ENCODE measurements at regions of chr1 and their contacts with region 1.

Region 1: GRCh38 chr1:37859507-37860345 is at the start of gene MTF1:
- DNase-seq: peak; percentile 95
- ATAC-seq: peak; percentile 98
- H3K4me3 ChIP-seq: peak within 1 kb of the TSS; percentile 92 to 99 (median 99)
- H3K27ac ChIP-seq: peak within 1 kb of the TSS; percentile 81
- H3K4me1 ChIP-seq: peaks cover 27% of the 10 kb centered on the region
- H3K27me3 ChIP-seq: peaks cover 0 to 5% of the 10 kb centered on the region in 2 experiments; a peak in 2 of 5 replicates
- CTCF ChIP-seq: peak; percentile 95
- EP300 ChIP-seq: no peak
- POLR2A ChIP-seq: peak; percentile 88 to 89
- RAD21 ChIP-seq: peak; percentile 41; the same call in 1 of the 2 replicates
- total RNA-seq, gene MTF1: 3.3 and 7.2 TPM in 2 replicates

Region 2: GRCh38 chr1:37807555-37808368 is 52.0 kb before region 1 on chr1 and contains the starts of genes C1orf122 and YRDC:
- CTCF ChIA-PET with region 1: interaction called, 6 read pairs
- POLR2A ChIA-PET with region 1: interaction called, 19 read pairs
- in situ Hi-C with region 1: loop called (anchors 5 kb)
- intact Hi-C with region 1: loop called (anchors 1 kb)
- DNase-seq: peak; percentile 83
- ATAC-seq: peak; percentile 87
- H3K4me3 ChIP-seq: peak within 1 kb of the TSS; percentile 72 to 85 (median 75)
- H3K27ac ChIP-seq: peak within 1 kb of the TSS; percentile 75
- H3K4me1 ChIP-seq: peaks cover 42% of the 10 kb centered on the region
- H3K27me3 ChIP-seq: no peaks in the 10 kb centered on the region; a peak in 1 of 5 replicates
- CTCF ChIP-seq: no peak
- EP300 ChIP-seq: no peak
- POLR2A ChIP-seq: peak; percentile 86 to 89
- RAD21 ChIP-seq: peak; percentile 40; the same call in 1 of the 2 replicates
- total RNA-seq, gene C1orf122: 31.3 and 40.6 TPM in 2 replicates
- total RNA-seq, gene YRDC: 29.2 and 31.8 TPM in 2 replicates

Region 3: DNA sequence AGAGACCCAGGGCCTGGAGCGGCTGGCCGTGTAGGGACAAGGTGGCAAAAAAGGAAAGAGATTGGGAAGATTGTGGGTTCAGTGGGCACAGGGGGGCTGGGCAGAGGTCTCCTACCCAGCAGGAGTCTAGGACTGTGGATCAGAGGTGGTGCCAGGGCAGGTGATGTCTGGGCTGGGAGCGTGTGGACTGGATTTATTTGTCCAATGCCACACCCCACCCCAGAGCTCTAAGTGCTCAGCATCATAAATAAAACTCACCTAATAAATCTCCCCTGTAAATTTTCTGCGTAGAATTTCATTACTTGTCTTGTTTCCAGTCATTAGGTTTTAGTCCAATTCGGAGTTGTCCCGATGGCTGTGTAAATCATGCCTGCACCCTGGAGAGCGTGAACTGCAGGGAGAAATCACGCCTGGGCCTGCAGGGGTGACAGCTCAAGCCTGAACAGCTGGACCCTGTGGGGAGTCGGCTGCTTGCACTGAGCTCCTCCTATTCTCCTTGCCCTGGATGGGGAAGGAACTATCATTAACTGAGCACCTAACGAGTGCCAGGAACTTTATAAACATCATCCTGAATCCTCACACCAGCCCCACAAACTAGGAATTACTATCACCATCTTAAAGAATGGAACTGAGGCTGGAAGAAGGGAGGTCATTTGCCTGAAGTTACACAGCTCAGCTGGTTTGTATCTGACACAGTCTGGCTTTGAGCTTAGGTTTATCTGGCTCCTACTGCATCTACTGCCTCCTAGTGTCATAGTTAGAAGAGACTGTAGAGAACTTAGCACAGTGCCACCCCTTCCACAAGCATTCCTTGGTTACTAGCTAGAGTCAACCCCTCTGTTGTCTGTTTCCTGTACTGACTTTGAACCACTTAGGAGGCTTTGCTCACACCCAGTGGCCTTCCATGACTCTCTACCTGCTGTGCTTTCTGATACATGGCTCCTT is 211.9 kb after region 1 on chr1:
- CTCF ChIA-PET with region 1: no interaction called
- POLR2A ChIA-PET with region 1: no interaction called
- in situ Hi-C with region 1: no loop called
- intact Hi-C with region 1: no loop called
- DNase-seq: peak; percentile 17
- ATAC-seq: peak; percentile 88
- H3K4me3 ChIP-seq: no peak overlapping the region
- H3K27ac ChIP-seq: no peak overlapping the region
- H3K4me1 ChIP-seq: peaks cover 10% of the 10 kb centered on the region
- H3K27me3 ChIP-seq: peaks cover 0 to 1% of the 10 kb centered on the region in 2 experiments; a peak in 2 of 5 replicates
- CTCF ChIP-seq: peak; percentile 37
- EP300 ChIP-seq: no peak
- POLR2A ChIP-seq: no peak
- RAD21 ChIP-seq: no peak

Measured in HepG2 (cell line).